Activated B cell treated with CpG ODN at 0.5 μM for 24 hours (primary cell): ENCODE measurements at regions of chr18 and their contacts with region 1.

Region 1: DNA sequence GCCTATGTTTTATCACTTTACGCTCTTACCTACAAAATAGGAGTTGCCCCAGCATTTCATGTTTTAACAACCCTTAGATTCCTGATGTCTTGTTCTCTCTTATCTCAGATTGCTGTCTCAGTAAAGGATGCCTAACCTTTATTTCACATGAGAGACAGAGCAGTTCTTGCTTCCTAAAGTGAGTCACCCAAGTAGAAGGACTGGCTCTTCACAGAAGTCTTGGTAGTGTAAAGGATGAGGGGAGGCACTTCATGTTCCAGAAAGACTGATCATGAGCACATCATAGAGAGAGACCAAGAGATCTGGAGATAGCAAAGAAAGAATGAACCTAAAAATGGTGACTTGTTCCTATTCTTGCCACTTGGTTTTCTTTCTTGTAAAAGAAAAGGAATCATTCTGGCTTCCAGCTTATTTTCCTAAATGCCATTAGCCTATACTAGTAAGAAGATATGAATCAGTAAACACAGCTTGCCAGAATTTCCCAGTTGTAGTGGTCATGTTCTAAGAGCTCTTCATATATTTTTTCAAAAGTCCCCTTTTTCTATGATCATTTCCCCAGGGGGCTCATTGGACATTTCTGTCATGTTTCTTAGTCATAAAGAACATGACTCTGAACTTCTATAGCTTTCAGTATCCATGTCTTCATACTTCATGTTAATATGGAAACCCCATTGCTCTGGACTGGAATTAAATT is 54.9 kb downstream of the MAPRE2 start:
- DNase-seq: no peak
- ATAC-seq: peak; percentile 88
- H3K4me3 Mint-ChIP-seq: peak overlapping the region; percentile 55
- H3K27ac Mint-ChIP-seq: peak overlapping the region; percentile 86
- H3K4me1 Mint-ChIP-seq: peaks cover 35% of the 10 kb centered on the region
- H3K27me3 Mint-ChIP-seq: no peaks in the 10 kb centered on the region
- CTCF ChIP-seq: no peak

Region 2: GRCh38 chr18:35050028-35050546 is 46.0 kb before region 1 on chr18:
- CTCF ChIA-PET with region 1: interaction called, 3 read pairs
- POLR2A ChIA-PET with region 1: no interaction called
- intact Hi-C with region 1: loop called (anchors 2 kb)
- DNase-seq: no peak
- ATAC-seq: peak; percentile 41
- H3K4me3 Mint-ChIP-seq: peak overlapping the region; percentile 71
- H3K27ac Mint-ChIP-seq: peak overlapping the region; percentile 95
- H3K4me1 Mint-ChIP-seq: peaks cover 79% of the 10 kb centered on the region
- H3K27me3 Mint-ChIP-seq: no peaks in the 10 kb centered on the region
- CTCF ChIP-seq: no peak

Region 3: GRCh38 chr18:35085450-35086380 is 10.4 kb before region 1 on chr18:
- CTCF ChIA-PET with region 1: interaction called, 5 read pairs
- POLR2A ChIA-PET with region 1: no interaction called
- intact Hi-C with region 1: loop called (anchors 2 kb)
- DNase-seq: no peak
- ATAC-seq: no peak
- H3K4me3 Mint-ChIP-seq: no peak overlapping the region
- H3K27ac Mint-ChIP-seq: no peak overlapping the region
- H3K4me1 Mint-ChIP-seq: peaks cover 16% of the 10 kb centered on the region
- H3K27me3 Mint-ChIP-seq: no peaks in the 10 kb centered on the region
- CTCF ChIP-seq: no peak

Region 4: DNA sequence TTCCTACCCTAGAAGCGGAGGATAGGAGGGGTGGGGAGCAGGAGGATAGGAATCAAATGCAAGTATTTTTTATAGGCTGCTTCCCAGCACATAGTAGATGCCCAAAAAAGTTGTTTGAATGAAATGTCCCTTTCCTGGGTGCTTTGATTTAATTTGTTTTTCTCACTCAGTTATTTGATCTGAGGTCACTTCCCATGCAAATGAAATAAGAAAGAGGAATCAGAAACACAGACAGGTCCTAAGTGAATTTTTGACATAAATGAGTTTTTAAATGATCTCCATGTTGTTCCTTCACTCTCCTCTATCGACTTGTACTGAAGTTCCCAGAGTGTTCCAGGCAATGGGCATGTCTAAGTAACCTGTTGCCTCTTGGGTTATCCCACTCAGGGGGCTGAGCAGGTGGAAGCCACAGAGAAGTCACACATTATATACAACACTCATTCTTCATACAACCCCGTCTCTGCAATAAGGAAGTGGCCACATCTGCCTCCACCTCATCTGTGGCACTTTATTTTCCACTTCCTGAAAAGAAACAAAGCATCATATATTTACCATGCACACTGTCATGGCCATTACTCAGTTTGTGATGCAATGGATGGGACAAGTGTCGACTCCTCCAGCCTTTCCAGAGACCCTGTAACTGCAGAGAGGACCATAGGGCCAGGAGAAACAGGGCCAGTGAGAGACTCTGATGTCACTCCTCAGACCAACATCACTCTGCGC is 62.8 kb after region 1 on chr18:
- CTCF ChIA-PET with region 1: no interaction called
- POLR2A ChIA-PET with region 1: no interaction called
- intact Hi-C with region 1: loop called (anchors 1 kb)
- DNase-seq: no peak
- ATAC-seq: peak; percentile 91
- H3K4me3 Mint-ChIP-seq: peak overlapping the region; percentile 73
- H3K27ac Mint-ChIP-seq: peak overlapping the region; percentile 97
- H3K4me1 Mint-ChIP-seq: peaks cover 31% of the 10 kb centered on the region
- H3K27me3 Mint-ChIP-seq: no peaks in the 10 kb centered on the region
- CTCF ChIP-seq: no peak

Region 5: GRCh38 chr18:35189510-35189909 is 93.4 kb after region 1 on chr18:
- CTCF ChIA-PET with region 1: no interaction called
- POLR2A ChIA-PET with region 1: no interaction called
- intact Hi-C with region 1: no loop called
- DNase-seq: no peak
- ATAC-seq: no peak
- H3K4me3 Mint-ChIP-seq: no peak overlapping the region
- H3K27ac Mint-ChIP-seq: no peak overlapping the region
- H3K4me1 Mint-ChIP-seq: no peaks in the 10 kb centered on the region
- H3K27me3 Mint-ChIP-seq: peaks cover 2% of the 10 kb centered on the region
- CTCF ChIP-seq: no peak